Stomach (tissue), 19 donors: ENCODE measurements at regions of chr12 and their contacts with region 1.

Region 1: DNA sequence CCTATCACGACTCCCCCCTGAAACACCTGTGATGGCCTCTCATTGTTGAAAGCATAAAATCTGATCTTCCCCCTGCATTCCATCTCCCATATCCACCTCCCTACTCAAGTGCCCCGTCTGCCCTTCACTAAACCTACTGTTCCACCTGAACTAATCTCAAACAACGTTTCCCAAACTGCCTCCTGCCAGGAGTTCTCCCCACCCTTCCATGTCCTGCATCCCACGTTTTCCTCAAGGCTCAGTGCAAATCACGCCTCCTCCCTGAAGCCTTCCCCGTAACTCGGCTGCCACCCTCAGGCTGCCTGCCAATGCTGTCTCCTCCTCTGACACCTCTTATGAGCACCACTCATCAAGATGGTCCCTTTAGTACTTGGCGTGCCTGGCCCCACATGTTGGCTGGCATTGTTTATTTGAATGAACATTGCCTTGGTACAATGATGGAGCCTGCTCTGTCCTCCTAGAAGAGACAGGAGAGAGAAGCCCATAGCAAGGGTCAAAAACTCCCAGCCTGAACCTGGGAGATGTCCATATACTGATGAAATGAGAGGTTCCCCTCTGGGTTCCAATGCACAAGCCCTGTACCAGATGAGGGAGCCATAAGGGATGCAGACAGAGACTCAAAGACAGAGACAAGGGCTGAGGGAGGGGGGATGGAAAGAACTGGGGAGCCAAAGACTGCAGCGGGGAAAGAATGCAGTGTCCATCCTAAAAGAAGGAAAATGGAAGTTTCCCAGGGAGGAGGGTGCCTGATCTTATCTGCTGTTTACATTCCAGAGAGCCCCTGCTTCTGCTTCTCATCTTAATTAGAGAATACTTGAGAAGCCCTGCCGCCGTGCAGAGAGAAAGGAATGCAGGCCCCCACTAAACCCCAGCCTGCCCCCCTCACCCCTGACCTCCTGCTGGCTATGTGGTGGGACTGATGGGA is 27.5 kb downstream of the KRT18 start:
- DNase-seq: peak; percentile 66 to 75
- H3K4me3 ChIP-seq: no peak overlapping the region
- H3K27ac ChIP-seq: no peak overlapping the region
- H3K4me1 ChIP-seq: peaks cover 0 to 17% (median 9%) of the 10 kb centered on the region in 4 donors
- H3K27me3 ChIP-seq: peaks cover 0 to 10% (median 0%) of the 10 kb centered on the region in 3 donors
- CTCF ChIP-seq: peak in 1 of 7 experiments; percentile 31
- EP300 ChIP-seq: no peak
- POLR2A ChIP-seq: no peak

Region 2: DNA sequence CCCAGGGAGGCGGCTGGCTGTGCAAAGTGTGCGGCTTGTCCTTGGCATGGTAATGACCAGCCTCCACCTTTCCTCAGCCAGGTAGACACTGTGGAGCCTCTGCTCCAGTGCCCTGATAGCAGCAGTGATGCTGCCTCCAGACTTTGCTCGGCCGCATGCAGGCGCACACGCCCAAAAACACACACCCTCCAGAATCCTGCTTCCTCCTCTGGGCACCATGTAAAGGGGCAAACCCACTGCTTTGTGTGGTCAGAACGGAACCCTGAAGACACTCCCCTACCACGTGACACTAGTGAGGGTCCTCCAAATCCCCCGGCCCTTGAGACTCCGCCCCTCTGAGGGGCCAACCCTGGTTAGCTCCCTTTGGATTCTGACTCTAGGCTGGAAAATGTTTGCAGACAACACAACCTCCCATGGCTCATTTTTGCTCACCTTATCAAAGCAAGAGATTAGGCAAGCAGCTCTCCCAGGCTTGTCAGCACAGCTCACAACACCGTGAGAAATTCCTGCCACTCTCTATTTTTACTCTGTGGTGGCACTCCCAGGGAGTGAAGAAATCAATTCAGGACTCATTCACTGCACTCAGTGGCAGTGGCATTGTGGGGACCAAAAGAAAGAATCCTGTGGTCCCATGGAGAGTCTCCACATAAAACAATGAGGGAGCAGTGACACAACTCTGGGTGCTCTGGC is 277.6 kb before region 1 on chr12:
- intact Hi-C with region 1: no loop called
- DNase-seq: peak in 1 of 2 donors; percentile 19
- H3K4me3 ChIP-seq: no peak overlapping the region
- H3K27ac ChIP-seq: no peak overlapping the region
- H3K4me1 ChIP-seq: no peaks in the 10 kb centered on the region
- H3K27me3 ChIP-seq: peaks cover 0 to 76% (median 6%) of the 10 kb centered on the region in 3 donors
- CTCF ChIP-seq: no peak
- EP300 ChIP-seq: no peak
- POLR2A ChIP-seq: no peak

Region 3: DNA sequence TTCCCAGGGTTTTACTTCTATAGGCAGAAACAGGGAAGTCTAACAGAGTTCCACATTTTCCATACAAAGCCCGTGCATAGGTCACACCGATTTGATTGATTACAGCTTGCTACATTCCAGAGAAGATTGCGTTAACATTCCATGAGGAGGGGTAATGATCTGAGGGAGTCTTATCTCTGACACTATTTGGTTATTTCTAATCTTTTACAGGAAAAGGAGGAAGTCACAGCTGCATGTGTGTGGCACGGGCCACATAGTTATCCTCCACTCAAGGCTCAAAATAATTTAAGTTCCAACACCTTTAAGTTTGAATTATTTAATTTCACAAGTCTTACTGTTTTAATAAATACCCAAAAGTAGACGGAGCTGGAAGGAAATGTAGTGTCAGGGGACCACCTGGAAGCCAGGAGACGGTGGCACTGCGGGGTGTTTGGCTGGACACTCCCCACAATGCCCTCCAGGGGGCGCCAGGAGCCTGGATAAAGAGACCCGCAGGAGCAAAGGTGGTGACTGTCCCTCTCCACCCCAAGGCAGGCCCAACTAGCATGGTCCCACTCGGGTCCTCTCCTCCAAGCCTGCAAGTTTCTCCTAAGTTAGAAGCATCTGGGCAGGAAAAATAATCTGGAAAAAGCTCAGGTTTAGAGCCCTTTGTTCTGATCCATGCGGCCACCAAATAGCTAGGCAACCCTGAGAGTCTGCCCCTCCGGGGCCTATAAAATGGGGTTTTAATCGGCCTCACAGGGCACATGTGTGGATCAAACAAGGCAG is 91.7 kb before region 1 on chr12:
- intact Hi-C with region 1: loop called (anchors 5 kb)
- DNase-seq: peak; percentile 87 to 90
- H3K4me3 ChIP-seq: no peak overlapping the region
- H3K27ac ChIP-seq: peak overlapping the region in 3 of 5 donors; percentile 27 to 62 (median 54)
- H3K4me1 ChIP-seq: peaks cover 5 to 20% (median 6%) of the 10 kb centered on the region in 4 donors
- H3K27me3 ChIP-seq: peaks cover 0 to 22% (median 0%) of the 10 kb centered on the region in 3 donors
- CTCF ChIP-seq: peak in 6 of 7 experiments; percentile 9 to 96 (median 92)
- EP300 ChIP-seq: no peak
- POLR2A ChIP-seq: no peak

Region 4: GRCh38 chr12:53014709-53015108 is 38.3 kb after region 1 on chr12:
- intact Hi-C with region 1: no loop called
- DNase-seq: no peak
- H3K4me3 ChIP-seq: no peak overlapping the region
- H3K27ac ChIP-seq: peak overlapping the region in 1 of 5 donors; percentile 1
- H3K4me1 ChIP-seq: peaks cover 19 to 66% (median 43%) of the 10 kb centered on the region in 4 donors
- H3K27me3 ChIP-seq: no peaks in the 10 kb centered on the region
- CTCF ChIP-seq: no peak
- EP300 ChIP-seq: no peak
- POLR2A ChIP-seq: no peak

Region 5: DNA sequence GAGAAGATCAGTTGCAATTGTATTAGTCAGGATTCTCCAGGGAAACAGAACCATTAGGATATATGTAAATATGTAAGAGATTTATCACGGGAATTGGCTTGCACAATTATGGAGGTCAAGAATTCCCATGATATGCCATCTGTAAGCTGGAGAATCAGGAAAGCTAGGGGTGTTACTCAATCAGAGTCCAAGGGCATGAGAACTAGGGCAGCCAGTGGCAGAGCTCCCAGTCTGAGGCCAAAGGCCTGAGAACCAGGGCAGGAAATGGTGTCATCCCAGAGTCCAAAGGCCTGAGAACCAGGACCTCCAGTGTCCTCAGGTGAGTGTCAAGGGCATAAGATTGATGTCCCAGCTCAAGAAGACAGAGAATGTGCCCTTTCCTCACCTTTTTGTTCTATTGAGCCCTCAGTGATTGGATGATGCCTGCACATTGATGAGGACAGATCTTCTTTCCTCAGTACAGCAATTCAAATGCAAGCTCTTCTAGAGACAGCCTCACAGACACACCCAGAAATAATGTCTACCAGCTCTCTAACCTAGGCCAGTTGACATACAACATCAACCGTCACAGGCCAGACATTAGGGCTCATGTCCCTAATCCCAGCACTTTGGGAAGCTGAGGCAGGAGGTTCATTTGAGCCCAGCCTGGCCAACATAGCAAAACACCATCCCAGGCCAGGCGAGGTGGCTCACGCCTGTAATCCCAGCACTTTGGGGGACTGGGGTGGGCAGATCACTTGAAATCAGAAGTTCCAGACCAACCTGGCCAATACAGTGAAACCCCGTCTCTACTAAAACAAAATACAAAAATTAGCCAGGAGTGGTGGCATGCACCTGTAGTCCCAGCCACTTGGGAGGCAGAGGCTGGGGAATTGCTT is 169.2 kb after region 1 on chr12:
- intact Hi-C with region 1: no loop called
- DNase-seq: no peak
- H3K4me3 ChIP-seq: no peak overlapping the region
- H3K27ac ChIP-seq: no peak overlapping the region
- H3K4me1 ChIP-seq: no peaks in the 10 kb centered on the region
- H3K27me3 ChIP-seq: no peaks in the 10 kb centered on the region
- CTCF ChIP-seq: no peak
- EP300 ChIP-seq: no peak
- POLR2A ChIP-seq: no peak

Region 6: DNA sequence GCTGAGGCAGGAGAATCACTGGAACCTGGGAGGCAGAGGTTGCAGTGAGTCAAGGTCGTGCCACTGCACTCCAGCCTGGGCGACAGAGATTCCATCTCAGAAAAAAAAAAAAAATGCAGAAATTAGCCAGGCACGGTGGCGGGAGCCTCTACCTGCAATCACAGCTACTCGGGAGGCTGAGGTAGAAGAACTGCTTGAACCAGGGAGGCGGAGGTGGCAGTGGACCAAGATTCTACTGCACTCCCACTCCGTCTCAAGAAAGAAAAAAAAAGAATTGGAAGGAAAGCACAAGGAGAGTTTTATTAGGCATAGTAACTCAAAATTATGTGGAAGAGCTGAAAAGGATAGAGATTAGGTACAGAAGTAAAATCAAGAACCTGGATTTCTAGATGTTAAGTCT is 426.5 kb after region 1 on chr12:
- intact Hi-C with region 1: no loop called
- DNase-seq: no peak
- H3K4me3 ChIP-seq: no peak overlapping the region
- H3K27ac ChIP-seq: no peak overlapping the region
- H3K4me1 ChIP-seq: peaks cover 0 to 31% (median 15%) of the 10 kb centered on the region in 4 donors
- H3K27me3 ChIP-seq: no peaks in the 10 kb centered on the region
- CTCF ChIP-seq: no peak
- EP300 ChIP-seq: no peak
- POLR2A ChIP-seq: no peak